Activated CD4-positive, alpha-beta T cell treated with anti-CD3 and anti-CD28 coated beads, Interleukin-2, amount 10 ng/mL, durations not matched to agents 24 days and 14 days (primary cell): ENCODE measurements at regions of chr4 and their contacts with region 1.

Region 1: DNA sequence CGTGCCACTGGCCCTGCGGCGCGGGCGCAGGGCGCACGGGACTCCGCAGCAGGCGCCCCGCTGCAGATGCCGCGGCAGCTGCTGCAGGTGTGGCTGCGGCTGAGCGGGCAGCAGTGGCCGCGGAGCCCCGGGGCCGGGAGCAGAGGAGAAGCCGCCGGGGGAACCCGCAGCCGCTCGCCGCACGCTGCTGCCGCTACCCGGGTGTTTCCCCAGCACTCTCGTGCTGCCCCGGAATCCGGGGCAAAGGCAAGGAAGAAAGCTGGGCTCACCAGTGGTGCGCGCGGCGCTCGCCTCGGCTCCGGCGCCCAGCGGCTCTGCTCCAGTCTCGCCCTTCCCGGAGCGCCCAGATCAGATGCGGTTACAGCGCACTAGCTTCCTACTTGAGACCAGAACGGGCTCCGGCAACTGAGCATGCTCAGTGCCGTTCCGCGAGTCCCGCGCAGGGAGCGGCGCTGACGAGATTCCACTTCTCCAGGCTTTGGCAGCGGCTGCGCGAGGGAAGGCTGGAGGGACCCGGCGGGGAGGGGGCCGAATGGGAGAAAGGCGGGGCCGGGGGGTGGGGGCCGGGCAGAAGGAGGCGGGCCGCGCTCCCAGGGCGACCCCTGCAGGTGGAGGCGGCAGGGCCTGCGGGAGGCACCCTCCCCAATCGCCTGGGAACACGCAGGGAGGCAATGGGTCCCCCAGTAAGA is at the start of gene APBB2:
- DNase-seq: peak; percentile 80
- H3K4me3 Mint-ChIP-seq: peak within 1 kb of the TSS; percentile 87
- H3K27ac Mint-ChIP-seq: no peak within 1 kb of the TSS
- H3K4me1 Mint-ChIP-seq: peaks cover 27% of the 10 kb centered on the region
- H3K27me3 Mint-ChIP-seq: peaks cover 57% of the 10 kb centered on the region
- total RNA-seq, gene APBB2: 1.6 and 1.7 TPM in 2 replicates

Region 2: GRCh38 chr4:40607221-40607620 is 607.1 kb before region 1 on chr4:
- intact Hi-C with region 1: no loop called
- DNase-seq: no peak
- H3K4me3 Mint-ChIP-seq: no peak overlapping the region
- H3K27ac Mint-ChIP-seq: no peak overlapping the region
- H3K4me1 Mint-ChIP-seq: no peaks in the 10 kb centered on the region
- H3K27me3 Mint-ChIP-seq: no peaks in the 10 kb centered on the region

Region 3: DNA sequence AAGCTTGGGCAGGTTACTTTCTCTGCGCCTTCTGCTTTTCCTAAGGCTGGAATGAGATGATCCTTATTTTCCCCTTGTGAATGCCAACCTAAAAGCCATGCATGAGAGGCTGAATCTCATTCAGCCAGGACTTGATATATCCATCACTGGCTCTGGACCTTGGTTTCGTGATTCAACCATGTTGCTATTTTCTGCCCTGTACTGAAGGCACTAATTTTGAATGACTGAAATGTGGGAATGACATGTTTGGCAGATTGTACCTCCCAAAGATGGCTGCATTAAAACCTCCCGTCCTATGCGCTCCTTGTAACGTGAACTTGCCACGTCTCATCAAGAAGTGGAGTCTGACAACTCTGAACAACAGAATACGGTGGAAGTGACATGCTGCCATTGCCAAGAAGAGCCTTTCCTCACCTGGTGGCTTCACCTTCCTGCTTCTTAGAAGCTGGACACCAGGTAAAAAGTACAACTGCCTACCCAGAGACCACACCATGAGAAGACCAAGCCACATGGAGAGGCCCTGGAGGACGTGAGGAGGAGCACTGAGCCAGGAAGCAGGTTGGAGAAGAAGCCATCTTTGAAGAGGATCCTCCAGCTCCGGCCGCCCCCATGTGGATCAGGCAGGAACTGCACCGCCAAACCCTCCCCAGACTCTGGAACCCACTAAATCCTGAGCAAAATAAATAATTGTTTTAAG is 290.0 kb before region 1 on chr4:
- intact Hi-C with region 1: loop called (anchors 2 kb)
- DNase-seq: peak; percentile 91
- H3K4me3 Mint-ChIP-seq: no peak overlapping the region
- H3K27ac Mint-ChIP-seq: peak overlapping the region; percentile 86
- H3K4me1 Mint-ChIP-seq: peaks cover 12% of the 10 kb centered on the region
- H3K27me3 Mint-ChIP-seq: peaks cover 24% of the 10 kb centered on the region

Region 4: DNA sequence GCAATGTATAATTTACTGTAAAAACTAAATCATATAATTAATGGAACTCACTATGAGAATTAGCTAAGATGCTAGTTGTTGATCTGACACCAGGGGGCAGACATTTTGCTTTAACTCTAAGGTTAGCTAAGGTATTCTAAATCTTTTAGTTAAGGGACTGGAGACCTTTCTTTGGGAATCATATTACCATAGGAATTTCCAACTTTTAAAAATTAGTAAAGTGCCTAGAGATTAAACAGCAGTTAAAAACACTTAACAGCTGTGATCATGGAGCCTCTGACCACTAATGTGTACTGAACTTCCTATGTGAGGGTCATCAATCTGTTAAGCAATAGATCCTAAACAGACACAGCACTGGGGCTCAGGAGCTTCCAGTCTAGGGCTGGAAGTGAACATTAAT is 237.9 kb before region 1 on chr4:
- intact Hi-C with region 1: loop called (anchors 2 kb)
- DNase-seq: peak; percentile 67
- H3K4me3 Mint-ChIP-seq: no peak overlapping the region
- H3K27ac Mint-ChIP-seq: no peak overlapping the region
- H3K4me1 Mint-ChIP-seq: no peaks in the 10 kb centered on the region
- H3K27me3 Mint-ChIP-seq: peaks cover 2% of the 10 kb centered on the region

Region 5: GRCh38 chr4:41257257-41257901 is 43.1 kb after region 1 on chr4:
- intact Hi-C with region 1: loop called (anchors 5 kb)
- DNase-seq: peak; percentile 63
- H3K4me3 Mint-ChIP-seq: peak overlapping the region; percentile 48
- H3K27ac Mint-ChIP-seq: no peak overlapping the region
- H3K4me1 Mint-ChIP-seq: no peaks in the 10 kb centered on the region
- H3K27me3 Mint-ChIP-seq: peaks cover 46% of the 10 kb centered on the region